HepG2 (cell line): ENCODE measurements at regions of chr2 and their contacts with region 1.

Region 1: DNA sequence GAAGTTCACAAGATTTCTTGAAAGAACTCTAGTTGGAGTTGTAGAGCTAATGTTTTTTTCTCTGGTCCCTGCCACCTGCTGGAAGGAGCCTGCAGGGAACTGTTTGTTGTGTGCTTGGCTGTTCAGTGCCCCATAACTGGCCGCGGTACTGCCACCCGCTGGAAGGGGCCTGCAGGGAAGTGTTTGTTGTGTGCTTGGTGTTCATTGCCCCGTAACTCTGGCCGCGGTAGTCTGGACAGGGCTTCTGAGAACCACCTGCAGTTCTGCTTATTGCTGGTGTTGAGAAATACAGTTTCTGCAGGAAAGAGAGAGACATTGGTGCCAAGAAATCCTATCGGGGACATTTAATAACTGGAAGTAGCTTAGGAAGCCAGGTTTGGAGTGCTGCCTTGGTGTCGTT is 58.1 kb downstream of the AGAP1 start:
- DNase-seq: peak; percentile 81
- ATAC-seq: peak; percentile 98
- H3K4me3 ChIP-seq: no peak overlapping the region
- H3K27ac ChIP-seq: no peak overlapping the region
- H3K4me1 ChIP-seq: peaks cover 56% of the 10 kb centered on the region
- H3K27me3 ChIP-seq: no peaks in the 10 kb centered on the region
- CTCF ChIP-seq: peak; percentile 86
- EP300 ChIP-seq: no peak
- POLR2A ChIP-seq: no peak
- RAD21 ChIP-seq: peak; percentile 96

Region 2: GRCh38 chr2:235135990-235136561 is 415.9 kb before region 1 on chr2:
- CTCF ChIA-PET with region 1: interaction called, 8 read pairs
- POLR2A ChIA-PET with region 1: no interaction called
- in situ Hi-C with region 1: no loop called
- intact Hi-C with region 1: loop called (anchors 1 kb)
- DNase-seq: peak; percentile 78
- ATAC-seq: peak; percentile 95
- H3K4me3 ChIP-seq: no peak overlapping the region
- H3K27ac ChIP-seq: no peak overlapping the region
- H3K4me1 ChIP-seq: no peaks in the 10 kb centered on the region
- H3K27me3 ChIP-seq: peaks cover 0 to 40% of the 10 kb centered on the region in 2 experiments; a peak in 4 of 5 replicates
- CTCF ChIP-seq: peak; percentile 87
- EP300 ChIP-seq: no peak
- POLR2A ChIP-seq: no peak
- RAD21 ChIP-seq: peak; percentile 88

Region 3: GRCh38 chr2:235230821-235231601 is 321.0 kb before region 1 on chr2:
- CTCF ChIA-PET with region 1: no interaction called
- POLR2A ChIA-PET with region 1: no interaction called
- in situ Hi-C with region 1: no loop called
- intact Hi-C with region 1: no loop called
- DNase-seq: no peak
- ATAC-seq: no peak
- H3K4me3 ChIP-seq: no peak overlapping the region
- H3K27ac ChIP-seq: no peak overlapping the region
- H3K4me1 ChIP-seq: no peaks in the 10 kb centered on the region
- H3K27me3 ChIP-seq: peaks cover 4 to 63% of the 10 kb centered on the region in 2 experiments; a peak in 4 of 5 replicates
- CTCF ChIP-seq: no peak
- EP300 ChIP-seq: no peak
- POLR2A ChIP-seq: no peak
- RAD21 ChIP-seq: no peak

Region 4: GRCh38 chr2:235493775-235494715 is 57.9 kb before region 1 on chr2 and contains the start of gene AGAP1:
- CTCF ChIA-PET with region 1: interaction called, 4 read pairs
- POLR2A ChIA-PET with region 1: no interaction called
- in situ Hi-C with region 1: no loop called
- intact Hi-C with region 1: loop called (anchors 2 kb)
- DNase-seq: peak; percentile 74
- ATAC-seq: peak; percentile 82
- H3K4me3 ChIP-seq: peak within 1 kb of the TSS; percentile 74 to 86 (median 75)
- H3K27ac ChIP-seq: peak within 1 kb of the TSS; percentile 35
- H3K4me1 ChIP-seq: peaks cover 49% of the 10 kb centered on the region
- H3K27me3 ChIP-seq: peaks cover 0 to 14% of the 10 kb centered on the region in 2 experiments; a peak in 2 of 5 replicates
- CTCF ChIP-seq: no peak
- EP300 ChIP-seq: no peak
- POLR2A ChIP-seq: peak in 1 of 2 experiments; percentile 50; a peak in 1 of 4 replicates
- RAD21 ChIP-seq: peak; percentile 2; the same call in 1 of the 2 replicates
- total RNA-seq, gene AGAP1: 21.2 and 21.3 TPM in 2 replicates

Region 5: DNA sequence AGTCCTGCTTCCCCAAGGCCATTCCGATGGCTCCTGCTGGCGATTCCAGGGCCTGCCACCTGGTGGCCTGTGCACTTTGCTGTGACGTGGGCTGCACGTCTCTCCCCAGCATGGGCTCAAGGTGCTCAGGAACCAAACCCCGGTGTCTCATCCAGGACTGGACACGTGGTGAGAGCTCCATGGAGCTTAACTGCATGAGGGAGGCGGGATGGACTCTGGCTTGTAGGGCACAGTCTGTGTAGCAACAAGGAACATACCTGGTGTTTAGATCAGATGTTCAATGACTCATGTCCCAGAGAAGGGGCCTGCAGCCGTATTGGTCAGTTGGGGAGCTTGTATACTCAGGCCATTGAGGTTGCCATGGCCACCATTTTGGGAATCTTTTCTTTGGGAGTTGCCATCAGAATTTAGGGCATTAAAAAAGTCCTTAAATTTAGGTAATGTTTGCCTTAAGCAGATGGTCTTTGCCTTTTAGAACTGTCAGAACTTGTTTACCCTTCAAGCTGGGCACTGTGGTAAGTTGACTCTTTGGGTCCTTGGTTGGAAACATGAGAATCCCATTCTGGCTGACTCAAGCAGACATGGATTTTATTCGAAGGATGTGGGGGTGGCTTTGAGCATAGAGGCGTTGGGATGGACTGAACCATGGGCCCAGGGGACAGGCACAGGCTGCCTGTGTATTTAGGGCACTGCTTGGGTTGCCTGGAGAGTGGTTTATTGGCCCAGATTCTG is 37.2 kb before region 1 on chr2:
- CTCF ChIA-PET with region 1: interaction called, 13 read pairs
- POLR2A ChIA-PET with region 1: interaction called, 4 read pairs
- in situ Hi-C with region 1: no loop called
- intact Hi-C with region 1: no loop called
- DNase-seq: peak; percentile 94
- ATAC-seq: peak; percentile 96
- H3K4me3 ChIP-seq: no peak overlapping the region; a peak in 1 of 6 replicates
- H3K27ac ChIP-seq: peak overlapping the region; percentile 82
- H3K4me1 ChIP-seq: peaks cover 60% of the 10 kb centered on the region
- H3K27me3 ChIP-seq: no peaks in the 10 kb centered on the region
- CTCF ChIP-seq: peak; percentile 96
- EP300 ChIP-seq: peak; percentile 77 to 97
- POLR2A ChIP-seq: no peak
- RAD21 ChIP-seq: peak; percentile 92